ENCODE measurements at regions of chr2 and their contacts with region 1.

Region 1: DNA sequence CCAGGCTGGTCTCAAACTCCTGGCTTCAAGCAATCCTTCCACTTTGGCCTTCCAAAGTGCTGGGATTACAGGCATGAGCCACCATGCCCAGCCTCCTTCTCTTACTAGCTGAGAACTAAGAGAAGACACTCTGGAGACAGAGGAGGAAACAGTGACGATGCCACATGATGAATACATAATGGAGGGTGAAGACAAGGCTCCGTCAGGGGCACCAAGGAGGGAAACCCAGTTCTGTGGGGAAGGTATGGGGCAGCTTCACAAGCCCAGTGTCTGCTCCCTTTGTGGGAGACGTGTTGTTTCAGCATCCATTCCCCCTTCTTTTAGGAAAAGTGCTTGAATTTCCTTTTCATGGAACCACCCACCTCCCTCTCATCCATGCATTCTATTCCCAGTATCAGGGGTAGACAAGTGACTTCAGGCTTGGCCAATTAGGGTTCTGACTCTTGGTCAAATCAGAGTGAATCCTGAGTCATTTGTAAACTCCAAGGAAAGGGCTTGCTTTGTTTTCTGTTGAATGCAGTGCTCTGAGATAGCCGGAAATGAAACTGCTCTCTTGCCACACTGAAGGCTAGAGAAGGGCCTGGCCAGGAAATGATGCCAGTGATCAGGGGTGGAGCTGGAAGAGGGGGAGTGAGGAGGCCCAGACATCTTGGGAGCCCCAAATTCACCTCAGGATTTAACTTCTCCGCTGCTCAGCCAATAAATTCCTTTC is 23.7 kb downstream of the TMEM127 start:
- DNase-seq: peak; percentile 73
- CTCF ChIP-seq: no peak

Region 2: GRCh38 chr2:96254571-96254970 is 12.5 kb after region 1 on chr2:
- CTCF ChIA-PET with region 1: interaction called, 12 read pairs
- POLR2A ChIA-PET with region 1: no interaction called
- DNase-seq: no peak
- CTCF ChIP-seq: no peak

Region 3: DNA sequence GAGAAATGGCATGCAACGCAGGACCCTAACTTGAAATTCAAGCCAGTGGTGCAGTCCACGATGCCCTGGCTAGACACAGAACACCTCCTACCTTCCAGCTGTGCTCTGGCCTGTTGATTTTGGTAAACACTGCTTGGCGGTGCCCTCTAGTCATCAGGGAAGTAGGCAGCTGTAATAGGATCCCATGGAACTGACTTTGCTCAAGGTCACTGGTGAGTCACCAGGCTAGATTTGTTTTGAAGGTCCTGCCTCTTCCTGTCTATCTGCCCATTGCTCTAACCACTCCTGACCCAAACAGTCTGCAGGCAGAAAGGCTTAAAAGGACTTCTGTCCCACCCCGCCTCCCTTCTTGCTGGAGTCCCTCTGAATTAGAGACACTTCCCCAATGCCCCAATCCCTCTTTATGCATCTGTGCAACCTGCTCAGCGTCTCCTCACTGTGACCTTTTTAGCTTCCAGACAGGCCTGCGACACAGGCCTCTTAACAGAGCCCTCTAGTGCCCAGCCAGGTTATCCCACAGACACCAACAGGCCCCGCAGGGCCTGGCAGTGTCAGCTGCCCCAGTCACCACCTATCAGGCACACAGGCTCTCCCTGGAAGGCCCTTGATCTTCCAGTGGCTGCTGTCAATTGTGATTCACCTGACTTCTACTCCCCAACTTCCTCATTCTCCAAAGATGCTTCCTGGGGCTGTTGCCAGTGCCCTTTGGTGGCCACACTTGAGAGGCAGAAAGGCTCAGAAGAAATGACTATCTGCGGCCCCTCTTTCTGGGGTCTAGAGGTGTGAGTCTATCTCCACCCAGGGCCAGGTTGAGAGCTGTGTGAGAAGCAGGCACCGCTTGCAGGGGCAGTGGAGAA is 18.6 kb after region 1 on chr2:
- CTCF ChIA-PET with region 1: interaction called, 12 read pairs
- POLR2A ChIA-PET with region 1: no interaction called
- DNase-seq: peak; percentile 68
- CTCF ChIP-seq: peak; percentile 53

Region 4: DNA sequence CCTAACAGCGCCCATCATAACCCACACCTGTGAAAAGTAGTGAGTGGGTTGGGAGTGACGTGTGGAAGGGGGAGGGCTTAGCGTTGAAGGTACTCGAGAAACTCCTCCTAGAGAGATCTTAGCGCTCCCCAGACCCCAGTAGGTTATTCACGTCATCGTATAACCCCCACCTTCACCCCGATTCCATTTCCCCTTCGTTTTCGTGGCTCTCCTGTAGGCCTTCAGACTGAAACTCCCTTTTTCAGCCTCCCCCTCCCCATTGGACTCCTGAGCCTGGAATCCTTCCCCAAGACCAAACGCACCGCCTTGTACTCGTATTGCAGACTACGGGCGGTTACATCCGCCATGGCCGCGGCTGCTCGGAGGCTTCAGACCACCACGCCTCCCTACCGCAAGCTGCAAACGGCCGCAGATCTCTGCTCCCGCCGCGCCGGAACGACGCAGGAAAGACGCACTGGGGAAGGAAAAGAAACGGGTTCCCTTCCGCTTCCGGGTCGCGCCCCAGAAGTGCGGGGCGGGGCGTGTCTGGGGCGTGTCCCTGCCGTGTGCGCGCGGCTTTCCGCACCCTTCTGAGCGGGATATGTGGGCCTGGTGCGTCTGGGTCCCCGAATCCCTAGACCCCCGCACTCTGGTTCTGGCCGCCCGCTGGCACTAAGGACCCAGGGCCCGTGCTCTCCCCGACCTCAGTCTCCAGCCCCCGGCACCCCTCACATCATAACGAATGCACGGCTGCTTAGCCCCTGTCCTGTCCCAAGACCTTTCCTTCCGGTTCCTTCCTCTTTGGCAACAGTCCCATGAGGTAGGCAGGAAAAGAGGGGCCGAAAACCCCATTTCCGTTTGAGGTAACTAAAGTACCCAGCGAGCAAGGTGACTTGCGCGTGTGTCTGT is 63.3 kb after region 1 on chr2 and contains the start of gene SNRNP200:
- CTCF ChIA-PET with region 1: no interaction called
- POLR2A ChIA-PET with region 1: no interaction called
- DNase-seq: peak; percentile 92
- CTCF ChIP-seq: no peak

Region 5: DNA sequence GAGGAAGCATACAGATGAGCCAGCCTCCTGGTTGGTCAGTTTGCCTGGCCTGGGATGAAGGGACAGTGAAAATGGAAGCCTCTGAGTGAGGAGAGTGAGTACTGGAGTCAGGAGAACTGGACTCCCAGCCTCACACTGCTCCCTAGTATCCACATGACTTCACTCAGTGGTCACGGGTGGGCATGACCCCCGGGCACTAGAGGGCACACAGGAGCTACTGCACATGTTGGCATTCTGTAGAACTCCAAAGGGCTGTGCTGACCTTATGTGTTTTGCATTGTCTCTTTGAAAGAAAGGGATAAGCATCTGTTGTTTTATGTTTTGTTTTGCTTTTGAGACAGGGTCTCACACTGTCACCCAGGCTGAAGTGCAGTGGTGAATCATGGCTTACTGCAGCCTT is 117.3 kb after region 1 on chr2:
- CTCF ChIA-PET with region 1: no interaction called
- POLR2A ChIA-PET with region 1: no interaction called
- DNase-seq: no peak
- CTCF ChIP-seq: peak; percentile 21

Measured in GM10248 (cell line).